Activated B cell treated with CpG ODN at 0.5 μM for 24 hours (primary cell): ENCODE measurements at regions of chr22 and their contacts with region 1.

Region 1: DNA sequence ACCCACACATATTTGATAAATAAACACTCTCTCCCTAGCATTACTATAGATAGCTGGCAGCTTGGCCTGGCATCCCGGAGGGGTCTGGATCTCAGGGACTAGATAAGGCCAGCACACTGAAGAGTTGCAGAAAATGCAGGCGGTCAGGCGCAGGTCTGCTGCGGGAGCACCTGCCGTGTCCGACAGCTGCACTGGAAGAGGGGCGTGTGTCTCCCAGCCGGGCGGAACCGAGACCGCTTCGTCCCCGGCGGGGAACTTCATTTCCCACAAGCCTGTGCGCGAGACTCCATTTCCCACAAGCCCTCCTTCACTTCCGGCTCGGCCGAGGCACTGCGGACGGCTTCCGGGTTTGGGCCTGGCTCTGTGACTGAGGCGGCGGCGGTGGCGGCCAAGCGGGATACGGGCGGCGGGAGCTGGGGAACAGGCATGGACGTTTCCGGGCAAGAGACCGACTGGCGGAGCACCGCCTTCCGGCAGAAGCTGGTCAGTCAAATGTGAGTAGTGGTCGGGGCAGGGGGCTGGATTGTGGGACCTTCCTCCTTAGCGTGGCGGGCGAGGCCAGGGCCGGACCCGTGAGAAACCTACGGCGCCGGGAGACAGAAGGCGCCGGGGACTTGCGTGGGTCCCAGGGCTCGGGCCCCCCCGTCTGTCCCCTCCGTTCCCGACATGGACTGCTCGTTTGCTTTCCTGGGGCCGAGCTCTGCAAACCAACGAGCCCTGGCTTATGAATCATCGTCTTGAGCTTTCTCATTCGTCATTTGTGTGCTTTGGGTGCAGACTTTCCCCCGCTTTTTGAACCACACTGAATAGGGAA is at the start of gene MED15:
- DNase-seq: peak; percentile 85
- ATAC-seq: peak; percentile 82
- H3K4me3 Mint-ChIP-seq: peak within 1 kb of the TSS; percentile 96
- H3K27ac Mint-ChIP-seq: peak within 1 kb of the TSS; percentile 94
- H3K4me1 Mint-ChIP-seq: peaks cover 52% of the 10 kb centered on the region
- H3K27me3 Mint-ChIP-seq: no peaks in the 10 kb centered on the region
- CTCF ChIP-seq: no peak
- total RNA-seq, gene MED15: 112 and 127 TPM in 2 replicates

Region 2: DNA sequence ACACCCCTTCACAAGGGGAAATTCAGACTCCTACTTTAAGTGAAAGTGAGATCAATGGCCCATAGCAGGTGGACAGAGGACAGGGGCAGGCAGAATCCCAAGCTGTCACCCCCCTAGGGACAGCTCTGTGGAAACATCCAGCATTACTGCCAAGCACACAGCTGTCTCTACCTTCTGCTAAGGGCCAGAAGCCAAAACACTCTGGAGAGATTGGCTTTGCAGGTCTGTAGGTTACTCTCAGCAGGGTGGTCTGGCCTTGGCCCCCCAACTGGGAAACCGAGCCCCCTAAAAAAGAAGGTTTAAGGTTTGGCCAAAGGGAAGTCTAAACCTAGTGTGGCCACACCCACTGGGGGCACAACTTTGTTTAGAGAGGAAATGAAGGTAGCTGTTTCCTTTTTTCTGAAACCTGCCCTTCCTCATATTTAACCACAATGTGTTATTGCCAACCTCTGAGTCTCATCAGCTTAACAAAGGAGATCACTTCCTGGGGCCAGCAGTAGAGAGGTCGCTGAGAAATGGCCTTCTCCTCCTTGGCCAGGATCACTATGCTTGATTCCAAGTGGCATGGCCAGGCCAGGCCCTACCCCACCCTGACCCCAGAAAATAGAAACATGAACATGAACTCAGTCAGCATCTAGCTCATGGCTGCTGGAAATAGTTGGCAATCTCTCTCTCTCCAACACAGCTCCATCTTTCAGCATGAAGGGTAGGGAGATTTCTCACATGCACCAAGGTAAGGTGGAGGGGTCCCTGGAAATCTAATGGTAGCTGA is 44.0 kb before region 1 on chr22:
- CTCF ChIA-PET with region 1: no interaction called
- POLR2A ChIA-PET with region 1: interaction called, 12 read pairs
- intact Hi-C with region 1: no loop called
- DNase-seq: peak; percentile 29
- ATAC-seq: peak; percentile 76
- H3K4me3 Mint-ChIP-seq: peak overlapping the region; percentile 49
- H3K27ac Mint-ChIP-seq: peak overlapping the region; percentile 99
- H3K4me1 Mint-ChIP-seq: peaks cover 47% of the 10 kb centered on the region
- H3K27me3 Mint-ChIP-seq: no peaks in the 10 kb centered on the region
- CTCF ChIP-seq: no peak

Region 3: GRCh38 chr22:20523086-20523983 is 15.9 kb after region 1 on chr22:
- CTCF ChIA-PET with region 1: no interaction called
- POLR2A ChIA-PET with region 1: interaction called, 3 read pairs
- intact Hi-C with region 1: loop called (anchors 2 kb)
- DNase-seq: no peak
- ATAC-seq: no peak
- H3K4me3 Mint-ChIP-seq: no peak overlapping the region
- H3K27ac Mint-ChIP-seq: peak overlapping the region; percentile 50
- H3K4me1 Mint-ChIP-seq: peaks cover 40% of the 10 kb centered on the region
- H3K27me3 Mint-ChIP-seq: no peaks in the 10 kb centered on the region
- CTCF ChIP-seq: no peak

Region 4: GRCh38 chr22:20531315-20532201 is 24.1 kb after region 1 on chr22:
- CTCF ChIA-PET with region 1: no interaction called
- POLR2A ChIA-PET with region 1: no interaction called
- intact Hi-C with region 1: loop called (anchors 2 kb)
- DNase-seq: no peak
- ATAC-seq: no peak
- H3K4me3 Mint-ChIP-seq: no peak overlapping the region
- H3K27ac Mint-ChIP-seq: no peak overlapping the region
- H3K4me1 Mint-ChIP-seq: peaks cover 17% of the 10 kb centered on the region
- H3K27me3 Mint-ChIP-seq: no peaks in the 10 kb centered on the region
- CTCF ChIP-seq: no peak

Region 5: DNA sequence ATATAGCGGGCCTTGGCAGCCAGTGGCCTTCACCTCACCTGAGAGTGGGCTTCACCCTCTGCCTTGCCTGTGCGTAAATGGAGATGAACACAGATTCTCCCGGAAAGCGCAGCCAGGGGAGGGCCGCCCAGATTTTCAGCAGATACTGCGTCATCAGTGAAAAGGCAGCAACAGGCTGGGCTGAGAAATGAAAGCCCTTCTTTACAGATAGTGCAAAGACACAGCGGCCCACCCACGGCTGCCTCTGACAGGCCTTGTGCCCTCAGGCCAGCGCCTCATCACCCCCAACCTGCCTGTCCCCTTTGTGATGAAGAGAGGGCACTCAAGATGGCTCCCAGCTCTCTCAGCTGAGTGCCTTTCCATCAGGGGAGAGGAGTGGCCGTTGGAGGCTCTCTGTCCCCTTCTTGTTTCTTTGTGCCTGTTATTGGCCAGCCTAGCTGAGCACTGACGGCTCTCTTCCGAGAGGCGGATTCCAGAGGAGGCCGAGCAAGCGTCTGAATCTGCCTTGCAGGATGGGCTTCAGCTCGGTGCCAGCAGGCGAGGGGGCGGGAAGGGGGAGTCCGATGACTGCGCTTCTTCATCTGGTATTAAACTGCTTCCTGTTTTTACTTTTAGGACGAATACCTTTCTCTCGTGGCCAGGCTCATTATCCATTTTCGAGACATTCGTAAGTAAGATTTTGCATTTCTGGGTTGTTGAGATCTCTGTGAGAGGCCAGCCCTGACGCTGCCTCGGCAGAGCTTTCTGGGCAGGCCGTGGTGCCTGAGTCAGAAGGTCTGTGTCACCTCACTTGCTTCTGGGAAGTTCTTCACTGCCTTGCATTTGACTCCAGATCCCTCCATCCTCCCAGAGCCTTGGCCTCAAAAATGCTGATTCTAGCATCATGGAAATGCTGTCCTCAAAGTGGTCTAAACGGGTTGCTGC is 43.6 kb after region 1 on chr22:
- CTCF ChIA-PET with region 1: no interaction called
- POLR2A ChIA-PET with region 1: interaction called, 7 read pairs
- intact Hi-C with region 1: loop called (anchors 5 kb)
- DNase-seq: peak; percentile 42
- ATAC-seq: peak; percentile 88
- H3K4me3 Mint-ChIP-seq: peak overlapping the region; percentile 33
- H3K27ac Mint-ChIP-seq: peak overlapping the region; percentile 90
- H3K4me1 Mint-ChIP-seq: peaks cover 42% of the 10 kb centered on the region
- H3K27me3 Mint-ChIP-seq: no peaks in the 10 kb centered on the region
- CTCF ChIP-seq: no peak

Region 6: DNA sequence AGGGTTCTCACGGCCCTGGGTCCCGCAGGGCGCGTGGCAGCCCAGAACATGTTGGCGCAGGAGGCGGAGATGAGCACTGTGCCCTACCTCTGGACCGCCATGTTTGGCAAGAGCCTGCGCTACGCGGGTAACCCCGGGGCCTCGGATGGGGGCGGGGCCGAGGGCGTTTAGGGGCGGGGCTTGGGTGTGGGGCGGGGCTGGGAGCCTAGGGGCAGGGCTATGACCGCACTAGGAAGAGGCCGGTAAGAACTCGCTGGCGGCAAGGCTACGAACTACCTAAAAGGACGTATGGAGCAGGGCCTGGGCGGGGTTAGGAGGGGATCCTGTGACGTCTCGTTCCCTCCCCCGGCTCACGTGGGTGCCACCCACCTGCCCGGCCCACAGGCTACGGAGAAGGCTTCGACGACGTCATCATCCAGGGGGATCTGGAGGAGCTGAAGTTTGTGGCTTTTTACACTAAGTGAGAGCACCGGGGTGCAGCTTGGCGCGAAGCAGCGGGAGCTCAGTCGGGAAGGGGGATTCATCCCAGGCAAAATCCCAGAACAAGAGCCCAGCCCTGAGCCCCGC is 471.9 kb after region 1 on chr22:
- CTCF ChIA-PET with region 1: no interaction called
- POLR2A ChIA-PET with region 1: no interaction called
- intact Hi-C with region 1: no loop called
- DNase-seq: peak; percentile 47
- ATAC-seq: peak; percentile 73
- H3K4me3 Mint-ChIP-seq: peak overlapping the region; percentile 72
- H3K27ac Mint-ChIP-seq: peak overlapping the region; percentile 68
- H3K4me1 Mint-ChIP-seq: peaks cover 31% of the 10 kb centered on the region
- H3K27me3 Mint-ChIP-seq: no peaks in the 10 kb centered on the region
- CTCF ChIP-seq: no peak